ENCODE measurements at regions of chr12 and their contacts with region 1.

Region 1: DNA sequence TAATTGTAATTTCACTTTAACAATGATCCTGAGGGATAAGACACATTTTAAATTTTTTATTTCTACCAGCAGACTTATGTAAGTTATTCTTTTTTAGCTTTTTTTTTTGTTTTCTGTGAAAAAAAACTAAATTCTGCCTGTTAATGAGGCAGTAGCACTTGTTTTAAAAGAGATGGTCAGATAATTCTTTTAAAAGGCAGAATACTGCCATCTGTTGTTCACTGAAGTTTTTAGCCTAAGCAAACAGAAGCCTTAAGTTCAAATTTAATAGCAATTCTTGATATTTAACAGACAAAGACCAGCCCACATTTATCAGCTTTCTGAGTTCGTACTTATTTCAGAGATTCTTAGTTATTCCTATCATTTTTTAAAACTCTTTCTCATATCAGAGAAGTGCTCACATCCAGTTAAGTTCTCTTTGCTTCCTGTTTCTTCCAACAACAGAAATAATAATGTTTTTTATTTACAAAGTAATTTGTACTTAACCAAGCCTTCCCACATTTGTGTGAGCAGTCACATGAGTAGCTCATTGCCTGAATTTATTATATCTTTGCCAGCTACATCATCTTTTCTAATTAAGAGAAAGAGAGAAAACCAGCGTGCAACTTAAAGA is 93.4 kb upstream of the SLCO1C1 start:
- DNase-seq: no peak

Region 2: GRCh38 chr12:19757317-19757877 is 844.4 kb before region 1 on chr12:
- intact Hi-C with region 1: loop called (anchors 10 kb)
- DNase-seq: no peak

Region 3: DNA sequence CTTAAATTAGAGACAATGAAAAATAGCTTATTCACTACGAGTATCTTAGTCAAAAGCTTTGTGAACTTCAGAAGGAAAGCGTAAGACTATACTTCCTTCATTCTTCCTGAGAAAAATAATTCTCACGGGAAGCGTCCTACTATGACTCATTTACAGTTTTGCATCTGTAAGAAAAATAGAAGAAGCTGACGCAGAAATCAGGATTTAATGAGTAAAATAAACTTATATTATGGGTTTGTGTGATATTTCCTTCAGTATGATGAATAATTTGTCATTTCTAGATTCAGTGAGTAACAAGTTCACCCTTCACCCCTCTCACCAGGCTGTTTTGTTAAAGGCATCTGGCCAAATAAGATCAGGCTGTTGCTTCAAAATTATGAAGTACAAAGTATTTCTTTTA is 251.3 kb before region 1 on chr12:
- intact Hi-C with region 1: no loop called
- DNase-seq: no peak

Region 4: DNA sequence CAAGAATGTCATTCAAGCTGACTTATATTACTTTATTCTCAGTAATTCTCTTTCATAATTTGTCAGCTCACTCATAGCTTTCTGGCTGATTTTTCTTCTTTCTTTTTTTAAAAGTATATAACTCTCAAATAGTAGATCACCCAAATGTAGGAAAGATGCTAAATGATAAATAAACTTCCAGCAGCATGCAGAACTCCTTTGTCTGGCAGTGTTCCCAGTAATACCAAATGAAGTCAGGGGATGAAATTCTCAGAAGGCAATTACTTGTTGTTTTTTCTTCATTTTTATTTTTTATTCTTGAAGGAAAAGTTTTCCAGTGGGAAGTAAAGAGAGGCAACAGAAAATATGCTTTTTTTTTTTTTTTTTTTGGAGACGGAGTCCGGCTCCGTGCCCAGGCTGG is 39.9 kb before region 1 on chr12:
- intact Hi-C with region 1: no loop called
- DNase-seq: no peak

Region 5: DNA sequence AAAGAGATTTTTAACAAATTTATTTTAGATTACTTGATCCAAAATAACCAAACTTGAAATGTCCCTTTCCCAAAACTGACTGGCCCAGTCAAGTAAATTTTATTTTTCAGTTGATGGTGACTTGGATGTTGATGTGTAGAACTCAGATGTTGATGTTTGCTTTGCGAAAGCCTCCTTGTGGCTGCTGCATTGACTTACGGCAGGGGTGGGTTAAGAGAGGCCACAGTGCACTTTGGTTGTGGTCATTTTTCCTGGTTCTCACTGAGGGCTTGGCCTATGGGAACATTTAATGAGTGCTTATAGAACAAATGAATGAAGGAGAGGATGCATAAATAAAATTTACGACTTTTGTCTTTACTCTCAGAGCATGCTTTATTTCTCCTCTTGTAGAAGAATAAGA is 261.3 kb after region 1 on chr12:
- intact Hi-C with region 1: no loop called
- DNase-seq: no peak

Measured in cardiac septum (tissue), 1 donor.